Heart right ventricle (tissue), 16 donors: ENCODE measurements at regions of chr15 and their contacts with region 1.

Region 1: DNA sequence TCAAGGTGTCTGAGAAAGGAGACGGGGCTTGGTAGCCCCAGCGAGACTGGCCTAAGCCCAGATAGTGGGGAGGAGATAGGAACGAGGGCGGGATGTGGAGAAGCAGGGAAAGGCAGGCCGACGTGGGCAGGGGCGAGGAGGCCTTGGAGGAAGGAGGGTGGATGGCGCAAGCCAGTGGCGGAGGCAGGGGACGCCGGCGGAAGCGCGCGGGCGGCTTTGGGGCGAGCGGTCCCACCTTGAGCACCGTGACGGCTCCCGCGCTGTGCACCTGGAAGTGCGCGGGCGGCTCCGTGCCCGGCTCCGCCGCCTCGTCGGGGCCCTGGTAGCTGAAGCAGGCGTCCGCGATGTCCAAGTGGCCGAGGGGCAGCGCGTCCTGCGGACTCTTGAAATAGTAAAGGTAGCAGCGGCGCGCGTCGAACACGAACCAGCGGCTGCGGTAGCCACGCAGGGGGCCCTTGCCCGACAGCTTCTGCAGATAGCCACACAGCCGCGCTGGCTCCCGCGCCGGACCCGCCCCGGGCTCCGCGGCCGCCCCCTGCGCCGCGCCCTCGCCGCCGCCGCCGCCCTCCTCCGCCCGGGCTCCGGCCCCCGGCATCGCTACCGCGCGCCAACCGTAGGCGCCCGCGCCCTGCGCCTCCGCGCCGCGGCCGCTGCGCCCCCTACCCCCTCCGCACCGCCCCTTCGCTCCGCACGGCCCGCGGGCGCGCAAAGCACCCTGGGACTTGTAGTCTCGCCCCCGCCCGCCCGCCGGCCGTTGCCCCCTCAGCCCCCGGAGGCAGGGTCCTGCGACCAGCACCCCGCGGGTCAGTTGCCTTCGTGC is at the start of gene TBC1D2B:
- DNase-seq: peak in 1 of 2 donors; percentile 78
- ATAC-seq: peak; percentile 43 to 79 (median 70)
- H3K4me3 ChIP-seq: peak within 1 kb of the TSS; percentile 54 to 97 (median 83)
- H3K27ac ChIP-seq: peak within 1 kb of the TSS; percentile 59 to 96 (median 88)
- H3K4me1 ChIP-seq: peaks cover 7 to 63% (median 34%) of the 10 kb centered on the region in 9 donors
- H3K27me3 ChIP-seq: no peaks in the 10 kb centered on the region
- CTCF ChIP-seq: no peak
- total RNA-seq, gene TBC1D2B: 6.3 to 20.8 (median 10.0) TPM

Region 2: GRCh38 chr15:78000091-78000926 is 77.0 kb before region 1 on chr15:
- intact Hi-C with region 1: loop called in 3 of 10 experiments (anchors 5 to 10 kb)
- DNase-seq: peak; percentile 57 to 74
- ATAC-seq: peak; percentile 43 to 77 (median 60)
- H3K4me3 ChIP-seq: no peak overlapping the region
- H3K27ac ChIP-seq: no peak overlapping the region
- H3K4me1 ChIP-seq: peaks cover 9 to 45% (median 25%) of the 10 kb centered on the region in 9 donors
- H3K27me3 ChIP-seq: no peaks in the 10 kb centered on the region
- CTCF ChIP-seq: peak in 8 of 9 donors; percentile 37 to 62 (median 54)

Region 3: DNA sequence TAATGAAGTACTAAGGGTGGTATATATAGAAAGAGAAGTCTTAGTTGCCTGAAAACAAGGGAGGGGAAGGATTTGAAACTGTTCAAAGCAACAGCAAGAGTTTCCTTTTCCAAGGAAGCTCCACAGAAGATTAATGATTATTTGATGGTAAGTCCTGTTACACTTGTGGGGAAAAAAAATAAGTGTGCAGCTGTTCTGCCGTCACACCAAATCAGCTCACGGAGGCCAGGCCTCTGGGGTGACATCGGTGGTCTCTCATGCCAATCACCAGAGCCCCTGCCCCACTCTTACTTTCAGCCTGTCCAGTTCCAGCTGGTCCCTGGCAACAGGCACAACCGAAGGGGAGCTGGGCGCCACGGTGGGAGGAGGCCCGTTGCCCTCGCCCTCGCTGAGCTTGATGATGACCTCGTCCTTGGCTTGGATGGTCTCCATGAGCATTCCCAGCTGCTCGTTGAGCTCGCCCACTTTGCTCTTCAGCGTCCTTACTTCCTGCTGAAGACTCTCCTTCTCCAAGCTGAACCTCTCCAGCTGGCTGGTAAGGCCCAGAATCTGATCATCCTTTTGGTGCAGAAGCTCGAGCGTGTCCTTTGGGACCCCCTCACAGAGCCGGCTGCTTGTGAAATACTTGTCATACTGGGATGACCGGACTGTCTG is 53.3 kb before region 1 on chr15:
- intact Hi-C with region 1: loop called in 1 of 10 experiments (anchors 10 kb)
- DNase-seq: peak; percentile 62 to 72
- ATAC-seq: peak; percentile 79 to 92 (median 86)
- H3K4me3 ChIP-seq: no peak overlapping the region
- H3K27ac ChIP-seq: peak overlapping the region in 9 of 10 donors; percentile 43 to 89 (median 68)
- H3K4me1 ChIP-seq: peaks cover 4 to 39% (median 26%) of the 10 kb centered on the region in 9 donors
- H3K27me3 ChIP-seq: no peaks in the 10 kb centered on the region
- CTCF ChIP-seq: no peak

Region 4: DNA sequence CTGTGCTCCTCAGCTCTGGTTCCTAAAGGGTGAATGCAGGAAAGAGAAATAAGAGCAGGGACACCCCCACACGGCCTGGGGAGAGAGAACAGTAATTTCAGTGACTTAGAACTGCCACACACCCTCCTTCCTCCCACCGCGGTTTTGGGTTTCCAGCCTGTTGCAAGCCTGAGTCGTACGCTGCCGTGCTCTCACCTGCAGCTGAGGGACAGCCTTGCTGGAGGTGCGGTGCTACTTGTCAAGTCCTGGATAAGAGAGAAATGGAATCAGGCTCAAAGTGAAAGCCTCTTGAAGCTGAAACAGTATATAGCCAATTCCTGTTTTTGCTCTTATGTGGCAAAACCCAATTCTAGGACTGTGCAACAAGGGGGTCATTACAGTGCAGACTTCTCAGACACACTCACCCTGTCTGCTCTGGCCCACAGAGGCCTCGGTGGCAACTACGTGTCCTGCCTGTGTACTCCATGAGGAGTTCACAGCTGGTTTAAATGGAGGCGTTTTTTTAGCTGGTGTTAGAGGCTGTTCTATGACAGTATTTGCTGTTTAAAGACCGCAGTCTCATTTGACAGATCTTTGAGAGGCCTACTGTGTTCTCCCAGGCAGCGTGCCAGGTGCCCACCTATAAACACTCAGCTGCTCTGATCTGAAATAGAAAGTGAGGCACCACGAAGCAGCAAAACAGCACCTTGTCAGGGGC is 42.6 kb before region 1 on chr15:
- intact Hi-C with region 1: loop called in 5 of 10 experiments (anchors 5 to 10 kb)
- DNase-seq: no peak
- ATAC-seq: peak in 5 of 8 donors; percentile 16 to 65 (median 33)
- H3K4me3 ChIP-seq: peak overlapping the region in 1 of 10 donors; percentile 8
- H3K27ac ChIP-seq: peak overlapping the region in 8 of 10 donors; percentile 14 to 87 (median 54)
- H3K4me1 ChIP-seq: peaks cover 10 to 81% (median 54%) of the 10 kb centered on the region in 9 donors
- H3K27me3 ChIP-seq: no peaks in the 10 kb centered on the region
- CTCF ChIP-seq: no peak

Region 5: GRCh38 chr15:78049691-78050440 is 27.4 kb before region 1 on chr15:
- intact Hi-C with region 1: loop called in 1 of 10 experiments (anchors 2 kb)
- DNase-seq: no peak
- ATAC-seq: peak in 6 of 8 donors; percentile 31 to 61 (median 38)
- H3K4me3 ChIP-seq: peak overlapping the region in 1 of 10 donors; percentile 4
- H3K27ac ChIP-seq: peak overlapping the region in 8 of 10 donors; percentile 13 to 87 (median 70)
- H3K4me1 ChIP-seq: peaks cover 18 to 98% (median 66%) of the 10 kb centered on the region in 9 donors
- H3K27me3 ChIP-seq: no peaks in the 10 kb centered on the region
- CTCF ChIP-seq: no peak

Region 6: GRCh38 chr15:78064544-78064943 is 12.7 kb before region 1 on chr15:
- intact Hi-C with region 1: loop called in 1 of 10 experiments (anchors 1 kb)
- DNase-seq: no peak
- ATAC-seq: peak in 4 of 8 donors; percentile 9 to 44 (median 30)
- H3K4me3 ChIP-seq: no peak overlapping the region
- H3K27ac ChIP-seq: peak overlapping the region; percentile 66 to 83 (median 75)
- H3K4me1 ChIP-seq: peaks cover 25 to 97% (median 87%) of the 10 kb centered on the region in 9 donors
- H3K27me3 ChIP-seq: no peaks in the 10 kb centered on the region
- CTCF ChIP-seq: no peak

Region 7: GRCh38 chr15:78457101-78457500 is 379.8 kb after region 1 on chr15:
- intact Hi-C with region 1: no loop called
- DNase-seq: no peak
- ATAC-seq: peak in 4 of 8 donors; percentile 41 to 45 (median 44)
- H3K4me3 ChIP-seq: no peak overlapping the region
- H3K27ac ChIP-seq: peak overlapping the region in 5 of 10 donors; percentile 21 to 74 (median 61)
- H3K4me1 ChIP-seq: peaks cover 11 to 80% (median 66%) of the 10 kb centered on the region in 9 donors
- H3K27me3 ChIP-seq: no peaks in the 10 kb centered on the region
- CTCF ChIP-seq: no peak

Region 8: DNA sequence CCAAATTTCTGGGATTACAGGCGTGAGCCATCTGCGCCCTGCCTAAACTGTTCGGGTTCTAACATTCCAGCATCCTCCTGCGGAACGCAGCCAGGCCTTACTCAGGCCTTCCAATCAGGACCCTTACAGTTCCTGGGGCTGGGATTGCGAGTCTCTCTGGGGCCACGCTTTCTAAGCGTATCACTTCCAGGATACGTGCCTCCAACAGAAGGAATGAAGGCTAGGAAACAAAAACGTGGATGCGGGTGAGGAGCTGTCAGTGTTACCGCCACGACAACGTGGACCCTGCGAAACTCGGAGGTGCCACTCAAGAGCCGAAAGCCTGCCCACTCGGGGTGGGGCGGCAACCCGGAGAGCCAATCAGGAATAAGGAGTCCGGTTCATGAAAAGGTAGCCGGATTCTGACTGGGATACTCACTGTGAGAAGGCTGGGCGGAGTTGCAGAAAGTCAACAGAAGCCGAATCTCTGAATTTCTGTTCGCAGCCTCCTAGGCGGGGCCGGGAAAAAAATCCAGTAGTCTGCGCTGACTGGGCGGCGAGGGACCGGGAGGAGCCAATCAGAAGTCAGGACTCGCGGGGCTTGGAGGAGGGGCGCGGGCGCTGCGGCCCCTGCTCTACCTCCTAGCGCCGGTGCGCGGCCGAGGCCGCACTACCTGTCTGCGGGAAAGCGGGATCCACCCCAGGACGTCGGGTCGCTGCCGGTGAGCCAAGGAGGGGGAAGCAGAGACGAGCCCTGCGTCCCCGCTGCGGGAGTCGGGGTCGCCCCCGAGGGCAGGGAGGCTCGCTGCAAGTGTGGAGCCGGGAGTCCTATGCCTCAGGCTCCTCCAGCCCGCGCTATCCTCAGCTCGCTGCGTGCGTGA is 429.9 kb after region 1 on chr15 and contains the start of gene HYKK:
- intact Hi-C with region 1: no loop called
- DNase-seq: peak; percentile 86 to 93
- ATAC-seq: peak; percentile 94 to 99 (median 97)
- H3K4me3 ChIP-seq: peak within 1 kb of the TSS; percentile 51 to 96 (median 79)
- H3K27ac ChIP-seq: peak within 1 kb of the TSS in 9 of 10 donors; percentile 18 to 74 (median 57)
- H3K4me1 ChIP-seq: peaks cover 4 to 16% (median 9%) of the 10 kb centered on the region in 9 donors
- H3K27me3 ChIP-seq: peaks cover 0 to 15% (median 0%) of the 10 kb centered on the region in 7 donors
- CTCF ChIP-seq: peak in 2 of 9 donors; percentile 9 to 22
- total RNA-seq, gene HYKK: 4.3 to 7.7 (median 7.1) TPM